ENCODE measurements at regions of chr17 and their contacts with region 1.

Region 1: GRCh38 chr17:82219084-82219683 is 6.5 kb upstream of the CCDC57 start:
- H3K4me3 ChIP-seq: no peak overlapping the region
- H3K27ac ChIP-seq: no peak overlapping the region
- H3K4me1 ChIP-seq: no peaks in the 10 kb centered on the region
- CTCF ChIP-seq: no peak

Region 2: DNA sequence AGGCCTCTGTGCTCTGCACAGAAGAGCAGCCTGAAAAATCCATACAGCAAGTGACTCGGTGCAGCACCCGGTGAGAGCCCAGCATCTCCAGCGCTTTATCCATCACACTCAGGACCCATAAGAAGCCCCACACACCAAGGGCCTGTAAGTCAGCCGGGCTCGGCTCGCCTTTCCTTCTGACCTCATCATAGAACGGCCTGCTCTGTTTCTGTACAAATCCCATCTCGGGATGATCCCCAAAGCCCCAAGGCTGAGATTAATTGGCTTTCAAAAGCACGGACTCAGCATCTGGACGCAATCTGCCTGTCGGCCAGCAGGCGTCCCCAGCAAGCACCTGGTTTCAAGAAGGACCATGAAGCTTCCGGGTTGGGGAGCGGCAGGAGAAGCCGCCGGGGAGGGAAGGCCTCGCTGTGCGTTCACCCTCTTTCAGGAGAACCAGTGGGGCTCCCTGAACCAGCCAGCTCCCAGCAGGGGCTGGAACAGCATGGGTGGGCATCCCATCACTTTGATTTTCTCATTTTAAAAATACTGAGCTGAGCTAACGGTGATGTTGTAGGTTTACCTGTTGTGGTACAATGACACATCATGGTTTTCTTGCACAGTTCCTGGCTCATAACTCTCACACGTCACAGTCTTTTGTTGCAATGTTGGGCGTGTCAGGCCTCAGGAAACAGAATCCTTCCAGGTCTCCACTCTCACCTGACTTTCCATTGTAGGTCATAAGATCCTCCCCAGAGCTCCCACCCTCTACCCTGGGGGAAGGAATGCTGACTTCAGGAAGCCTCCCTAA is 13.3 kb before region 1 on chr17:
- CTCF ChIA-PET with region 1: interaction called, 10 read pairs
- POLR2A ChIA-PET with region 1: interaction called, 6 read pairs
- H3K4me3 ChIP-seq: no peak overlapping the region
- H3K27ac ChIP-seq: peak overlapping the region; percentile 26; the same call in 1 of the 2 replicates
- H3K4me1 ChIP-seq: peaks cover 5% of the 10 kb centered on the region; the same call in 1 of the 2 replicates
- CTCF ChIP-seq: peak; percentile 77

Region 3: DNA sequence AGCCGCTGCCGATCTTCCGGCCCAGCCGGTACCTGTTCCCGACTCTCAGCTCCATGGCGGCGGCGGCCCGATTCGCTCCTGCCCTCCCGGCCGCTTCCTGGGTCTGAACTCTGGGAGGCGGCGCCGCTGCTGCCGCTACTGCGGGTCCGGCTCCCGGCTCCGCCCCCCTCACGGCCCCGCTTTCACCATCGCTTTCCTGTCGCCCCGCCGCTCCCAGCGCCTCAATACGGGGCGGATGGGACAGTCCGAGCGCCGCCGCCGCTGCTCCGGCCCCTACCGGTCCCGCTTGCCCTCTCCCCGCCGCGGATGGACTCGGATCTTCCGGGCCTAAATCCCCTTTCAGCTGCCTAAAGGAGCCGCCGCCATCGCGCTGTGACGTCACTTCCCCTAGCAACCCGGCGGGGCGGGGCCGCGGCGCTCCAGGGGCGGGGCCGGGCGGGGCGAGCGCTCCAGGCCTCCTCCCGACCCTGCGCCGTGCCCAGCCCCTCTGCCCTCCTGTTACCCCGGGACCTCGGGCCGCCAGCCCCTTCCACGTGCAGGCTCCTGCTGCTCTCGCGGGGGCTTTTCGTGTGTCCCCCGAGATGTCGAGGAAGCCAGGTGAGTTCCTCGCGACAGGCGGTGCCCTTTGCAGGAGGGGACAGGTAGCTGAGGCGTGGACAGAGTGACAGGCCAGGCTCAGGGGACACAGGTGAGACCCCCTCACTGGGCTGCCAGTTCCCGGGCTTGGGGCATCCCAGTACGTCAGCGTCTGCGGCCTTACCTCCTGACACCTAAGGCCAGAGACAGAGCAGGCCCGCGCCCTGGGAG is 54.3 kb after region 1 on chr17 and contains the start of gene CSNK1D:
- CTCF ChIA-PET with region 1: no interaction called
- POLR2A ChIA-PET with region 1: no interaction called
- H3K4me3 ChIP-seq: peak within 1 kb of the TSS; percentile 87
- H3K27ac ChIP-seq: peak within 1 kb of the TSS; percentile 100
- H3K4me1 ChIP-seq: peaks cover 19% of the 10 kb centered on the region
- CTCF ChIP-seq: peak; percentile 62